ENCODE measurements at regions of chr17 and their contacts with region 1.

Region 1: GRCh38 chr17:1724506-1725362 is at the start of gene WDR81:
- DNase-seq: peak; percentile 92
- ATAC-seq: peak; percentile 64
- H3K4me3 ChIP-seq: peak within 1 kb of the TSS in 4 of 5 experiments; percentile 61 to 82 (median 72)
- H3K4me3 Mint-ChIP-seq: peak within 1 kb of the TSS; percentile 83
- H3K27ac ChIP-seq: peak within 1 kb of the TSS; percentile 83 to 87
- H3K27ac Mint-ChIP-seq: peak within 1 kb of the TSS; percentile 92
- H3K4me1 ChIP-seq: peaks cover 27 to 58% of the 10 kb centered on the region in 2 donors
- H3K4me1 Mint-ChIP-seq: peaks cover 51% of the 10 kb centered on the region
- H3K27me3 ChIP-seq: no peaks in the 10 kb centered on the region
- H3K27me3 Mint-ChIP-seq: no peaks in the 10 kb centered on the region
- CTCF ChIP-seq: no peak
- total RNA-seq, gene WDR81: 102 and 105 TPM in 2 replicates

Region 2: DNA sequence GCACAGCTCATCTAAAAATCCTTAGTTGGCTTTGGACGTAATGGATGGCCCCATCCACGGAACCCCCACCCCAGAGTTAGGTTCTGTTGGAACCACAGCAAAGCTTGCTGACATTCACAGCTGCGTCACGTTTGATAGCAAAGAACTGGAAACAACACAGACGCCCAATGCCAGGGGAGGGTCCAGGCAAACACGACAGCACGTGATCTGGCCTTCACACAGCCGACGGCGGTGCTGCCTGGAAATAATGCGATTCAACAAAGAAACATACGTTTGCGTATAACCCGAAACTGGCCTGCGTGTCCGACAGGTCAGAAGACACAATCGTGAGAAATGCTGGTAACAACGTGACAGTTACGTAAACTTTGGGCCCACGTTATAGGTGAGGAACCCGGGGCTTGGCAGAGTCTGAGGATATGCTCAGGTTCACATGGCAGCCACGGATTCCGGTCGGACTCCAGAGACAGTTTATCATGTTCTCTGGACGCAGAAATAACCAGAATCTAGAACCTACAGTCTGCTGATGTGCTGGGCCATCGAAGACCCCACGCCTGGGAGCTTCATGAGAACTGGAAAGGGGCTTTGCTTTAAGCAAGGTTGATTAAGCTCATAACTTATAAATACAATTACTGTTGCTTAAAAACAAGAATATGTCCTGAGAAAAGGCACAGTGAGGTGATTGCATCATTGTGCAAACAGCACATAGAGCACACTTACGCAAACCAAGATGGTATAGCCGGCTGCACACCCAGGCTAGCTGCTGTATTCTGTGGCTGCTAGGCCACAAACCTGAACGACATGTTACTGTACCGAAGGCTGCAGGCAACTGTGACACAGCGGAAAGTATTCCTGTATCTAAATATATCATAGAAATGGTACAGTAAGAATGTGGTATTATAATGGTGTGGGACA is 1442.5 kb before region 1 on chr17:
- CTCF ChIA-PET with region 1: no interaction called
- POLR2A ChIA-PET with region 1: no interaction called
- intact Hi-C with region 1: no loop called
- DNase-seq: no peak
- ATAC-seq: no peak
- H3K4me3 ChIP-seq: no peak overlapping the region
- H3K4me3 Mint-ChIP-seq: no peak overlapping the region
- H3K27ac ChIP-seq: no peak overlapping the region
- H3K27ac Mint-ChIP-seq: no peak overlapping the region
- H3K4me1 ChIP-seq: no peaks in the 10 kb centered on the region
- H3K4me1 Mint-ChIP-seq: no peaks in the 10 kb centered on the region
- H3K27me3 ChIP-seq: no peaks in the 10 kb centered on the region
- H3K27me3 Mint-ChIP-seq: no peaks in the 10 kb centered on the region
- CTCF ChIP-seq: no peak

Region 3: DNA sequence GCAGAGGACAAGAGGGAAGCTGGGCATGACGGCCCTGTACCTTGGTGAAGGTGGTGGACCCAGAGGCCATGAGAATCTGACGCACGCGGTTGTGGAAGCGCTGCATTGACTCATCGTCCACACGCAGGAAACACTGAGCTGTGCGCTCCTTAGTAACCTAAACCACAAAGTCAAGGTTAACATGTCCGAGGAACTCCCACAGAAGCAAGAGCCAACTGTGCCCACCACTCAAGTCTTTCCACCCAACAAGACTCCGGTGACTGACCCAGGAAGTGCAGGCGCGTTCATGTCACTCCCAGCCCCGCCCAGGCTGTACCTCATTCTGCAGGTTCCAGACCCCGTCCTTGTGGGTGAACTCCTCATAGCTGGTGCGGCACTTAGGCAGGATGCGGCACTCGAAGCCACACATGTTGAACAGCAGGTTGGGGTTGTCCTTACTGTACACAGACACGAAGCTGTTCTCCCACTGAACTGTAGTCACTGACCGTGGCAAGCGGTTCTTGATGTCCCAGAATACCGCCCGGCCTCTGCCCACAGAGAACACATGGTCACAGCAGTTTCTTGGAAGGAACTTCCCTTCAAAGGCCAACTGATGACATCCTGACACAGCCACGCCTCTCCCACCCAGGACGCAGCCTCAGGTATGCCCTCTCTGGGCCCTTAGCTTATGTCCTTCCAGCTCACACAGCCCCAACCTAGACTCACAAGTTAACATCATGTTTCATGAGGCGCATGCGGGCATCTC is 51.5 kb before region 1 on chr17:
- CTCF ChIA-PET with region 1: interaction called, 16 read pairs
- POLR2A ChIA-PET with region 1: interaction called, 5 read pairs
- intact Hi-C with region 1: loop called (anchors 5 kb)
- DNase-seq: no peak
- ATAC-seq: no peak
- H3K4me3 ChIP-seq: no peak overlapping the region
- H3K4me3 Mint-ChIP-seq: no peak overlapping the region
- H3K27ac ChIP-seq: no peak overlapping the region
- H3K27ac Mint-ChIP-seq: no peak overlapping the region
- H3K4me1 ChIP-seq: no peaks in the 10 kb centered on the region
- H3K4me1 Mint-ChIP-seq: peaks cover 7% of the 10 kb centered on the region
- H3K27me3 ChIP-seq: no peaks in the 10 kb centered on the region
- H3K27me3 Mint-ChIP-seq: no peaks in the 10 kb centered on the region
- CTCF ChIP-seq: no peak

Region 4: DNA sequence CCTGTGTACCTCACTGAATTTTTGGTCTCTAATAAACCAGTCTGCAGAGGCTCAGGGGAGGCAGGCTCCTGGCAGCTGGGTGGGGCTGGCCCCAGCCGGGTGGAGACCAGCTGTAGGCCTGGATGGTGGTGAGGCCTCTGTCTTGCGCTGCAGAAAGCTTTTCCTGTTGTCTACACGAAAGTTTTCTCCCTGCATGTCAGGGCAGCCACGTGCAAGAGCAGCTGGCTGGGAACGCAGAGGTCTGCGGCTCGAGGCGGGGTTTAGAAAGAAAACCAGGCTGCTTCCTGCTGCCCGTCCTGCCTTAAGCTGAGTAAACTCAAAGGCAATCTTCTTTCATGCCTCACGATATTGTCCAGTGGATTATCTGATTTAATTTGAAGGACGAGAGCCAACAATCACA is 39.5 kb after region 1 on chr17:
- CTCF ChIA-PET with region 1: interaction called, 71 read pairs
- POLR2A ChIA-PET with region 1: interaction called, 11 read pairs
- intact Hi-C with region 1: no loop called
- DNase-seq: peak; percentile 69
- ATAC-seq: peak; percentile 95
- H3K4me3 ChIP-seq: peak overlapping the region in 1 of 5 experiments; percentile 36
- H3K4me3 Mint-ChIP-seq: peak overlapping the region; percentile 65
- H3K27ac ChIP-seq: peak overlapping the region; percentile 33 to 39
- H3K27ac Mint-ChIP-seq: peak overlapping the region; percentile 89
- H3K4me1 ChIP-seq: peaks cover 24 to 52% of the 10 kb centered on the region in 2 donors
- H3K4me1 Mint-ChIP-seq: peaks cover 38% of the 10 kb centered on the region
- H3K27me3 ChIP-seq: no peaks in the 10 kb centered on the region
- H3K27me3 Mint-ChIP-seq: no peaks in the 10 kb centered on the region
- CTCF ChIP-seq: no peak

Region 5: GRCh38 chr17:1776328-1776727 is 51.6 kb after region 1 on chr17:
- CTCF ChIA-PET with region 1: interaction called, 397 read pairs
- POLR2A ChIA-PET with region 1: interaction called, 11 read pairs
- intact Hi-C with region 1: no loop called
- DNase-seq: no peak
- ATAC-seq: no peak
- H3K4me3 ChIP-seq: no peak overlapping the region
- H3K4me3 Mint-ChIP-seq: no peak overlapping the region
- H3K27ac ChIP-seq: no peak overlapping the region
- H3K27ac Mint-ChIP-seq: peak overlapping the region; percentile 74
- H3K4me1 ChIP-seq: peaks cover 6 to 12% of the 10 kb centered on the region in 2 donors
- H3K4me1 Mint-ChIP-seq: peaks cover 11% of the 10 kb centered on the region
- H3K27me3 ChIP-seq: no peaks in the 10 kb centered on the region
- H3K27me3 Mint-ChIP-seq: no peaks in the 10 kb centered on the region
- CTCF ChIP-seq: no peak

Region 6: DNA sequence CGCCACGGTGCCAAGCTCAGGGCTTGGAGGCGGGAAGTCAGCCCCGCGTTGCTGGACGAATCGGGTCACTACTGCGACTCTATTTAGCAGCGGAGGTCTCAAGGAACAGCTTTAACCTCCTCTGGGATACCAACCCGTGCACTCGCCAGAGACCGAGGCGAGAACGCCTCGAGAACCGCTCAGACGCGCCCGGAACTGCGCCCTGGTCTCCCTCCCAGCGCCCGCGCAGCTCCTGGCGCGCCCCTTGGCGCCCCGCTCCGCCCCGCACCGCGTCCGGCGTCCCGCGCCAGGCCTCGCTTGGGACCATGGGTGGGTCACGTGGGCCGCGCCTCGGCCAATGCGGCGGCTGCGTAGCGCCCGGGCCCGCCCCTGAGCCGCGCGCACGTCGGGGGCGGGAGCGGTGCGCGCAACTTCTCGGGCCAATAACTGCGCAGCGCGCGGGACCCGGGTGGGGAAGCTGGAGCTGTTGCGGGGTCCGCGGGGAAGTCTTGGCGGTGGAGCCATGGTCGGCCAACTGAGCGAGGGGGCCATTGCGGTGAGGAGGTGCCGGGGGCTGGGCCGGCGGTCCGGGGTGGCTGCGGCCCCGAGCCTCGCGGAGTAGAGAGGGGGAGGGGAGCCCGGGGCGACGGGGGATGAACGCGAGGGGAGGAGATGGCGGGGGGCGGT is 105.0 kb after region 1 on chr17 and contains the starts of genes RPA1 and SMYD4:
- CTCF ChIA-PET with region 1: interaction called, 10 read pairs
- POLR2A ChIA-PET with region 1: no interaction called
- intact Hi-C with region 1: loop called (anchors 1 kb)
- DNase-seq: peak; percentile 91
- ATAC-seq: peak; percentile 97
- H3K4me3 ChIP-seq: peak within 1 kb of the TSS; percentile 64 to 87 (median 76)
- H3K4me3 Mint-ChIP-seq: peak within 1 kb of the TSS; percentile 94
- H3K27ac ChIP-seq: peak within 1 kb of the TSS; percentile 60 to 74
- H3K27ac Mint-ChIP-seq: peak within 1 kb of the TSS; percentile 89
- H3K4me1 ChIP-seq: peaks cover 13 to 30% of the 10 kb centered on the region in 2 donors
- H3K4me1 Mint-ChIP-seq: peaks cover 45% of the 10 kb centered on the region
- H3K27me3 ChIP-seq: no peaks in the 10 kb centered on the region
- H3K27me3 Mint-ChIP-seq: no peaks in the 10 kb centered on the region
- CTCF ChIP-seq: no peak
- total RNA-seq, gene RPA1: 74.2 and 94.5 TPM in 2 replicates
- total RNA-seq, gene SMYD4: 37.5 and 42.3 TPM in 2 replicates

Region 7: GRCh38 chr17:1865252-1866037 is 140.7 kb after region 1 on chr17:
- CTCF ChIA-PET with region 1: interaction called, 50 read pairs
- POLR2A ChIA-PET with region 1: interaction called, 3 read pairs
- intact Hi-C with region 1: loop called (anchors 1 kb)
- DNase-seq: peak; percentile 73
- ATAC-seq: peak; percentile 57
- H3K4me3 ChIP-seq: no peak overlapping the region
- H3K4me3 Mint-ChIP-seq: no peak overlapping the region
- H3K27ac ChIP-seq: no peak overlapping the region
- H3K27ac Mint-ChIP-seq: no peak overlapping the region
- H3K4me1 ChIP-seq: no peaks in the 10 kb centered on the region
- H3K4me1 Mint-ChIP-seq: no peaks in the 10 kb centered on the region
- H3K27me3 ChIP-seq: no peaks in the 10 kb centered on the region
- H3K27me3 Mint-ChIP-seq: no peaks in the 10 kb centered on the region
- CTCF ChIP-seq: peak; percentile 93

Measured in B cell (primary cell).